ENCODE measurements at regions of chrX and their contacts with region 1.

Region 1: DNA sequence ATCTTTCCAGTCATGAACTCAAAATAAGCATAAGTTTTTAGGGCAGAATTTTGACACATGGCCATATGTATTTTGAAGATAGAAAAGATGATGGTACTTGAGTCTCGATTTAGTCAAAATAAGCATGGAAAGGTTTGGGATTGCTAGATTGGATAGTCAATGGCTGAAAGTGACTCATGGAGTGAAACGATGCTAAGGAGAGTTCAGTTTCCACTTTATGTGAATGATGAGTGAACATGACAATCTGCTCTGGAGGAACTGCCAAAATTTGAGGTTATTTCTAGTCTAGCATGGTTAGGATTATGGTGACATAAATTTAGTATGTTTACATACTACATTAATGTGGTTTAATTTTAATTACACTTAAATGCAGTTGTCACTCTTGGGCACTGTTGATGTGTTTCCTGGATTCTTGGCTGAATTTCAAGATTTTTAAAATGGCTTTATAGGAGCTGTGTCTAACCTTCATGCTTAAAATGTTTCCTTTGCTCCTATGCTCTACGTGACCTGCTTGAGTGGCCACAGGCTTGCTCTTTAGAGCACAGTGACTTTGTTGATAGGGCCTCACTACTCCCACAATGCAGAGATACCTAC is 17.1 kb downstream of the DDX3X start:
- DNase-seq: peak in 1 of 14 experiments; percentile 27
- ATAC-seq: peak; percentile 17
- H3K4me3 ChIP-seq: no peak overlapping the region
- H3K4me3 Mint-ChIP-seq: peak overlapping the region; percentile 0
- H3K27ac ChIP-seq: no peak overlapping the region
- H3K27ac Mint-ChIP-seq: peak overlapping the region; percentile 59
- H3K4me1 ChIP-seq: peaks cover 10% of the 10 kb centered on the region
- H3K4me1 Mint-ChIP-seq: peaks cover 43% of the 10 kb centered on the region
- H3K27me3 ChIP-seq: no peaks in the 10 kb centered on the region
- H3K27me3 Mint-ChIP-seq: no peaks in the 10 kb centered on the region
- CTCF ChIP-seq: no peak

Region 2: GRCh38 chrX:41313419-41313818 is 37.7 kb before region 1 on chrX:
- CTCF ChIA-PET with region 1: no interaction called
- POLR2A ChIA-PET with region 1: no interaction called
- intact Hi-C with region 1: loop called in 1 of 2 experiments (anchors 2 kb)
- DNase-seq: no peak
- ATAC-seq: no peak
- H3K4me3 ChIP-seq: no peak overlapping the region
- H3K4me3 Mint-ChIP-seq: no peak overlapping the region
- H3K27ac ChIP-seq: no peak overlapping the region
- H3K27ac Mint-ChIP-seq: no peak overlapping the region
- H3K4me1 ChIP-seq: no peaks in the 10 kb centered on the region
- H3K4me1 Mint-ChIP-seq: no peaks in the 10 kb centered on the region
- H3K27me3 ChIP-seq: no peaks in the 10 kb centered on the region
- H3K27me3 Mint-ChIP-seq: no peaks in the 10 kb centered on the region
- CTCF ChIP-seq: no peak

Region 3: DNA sequence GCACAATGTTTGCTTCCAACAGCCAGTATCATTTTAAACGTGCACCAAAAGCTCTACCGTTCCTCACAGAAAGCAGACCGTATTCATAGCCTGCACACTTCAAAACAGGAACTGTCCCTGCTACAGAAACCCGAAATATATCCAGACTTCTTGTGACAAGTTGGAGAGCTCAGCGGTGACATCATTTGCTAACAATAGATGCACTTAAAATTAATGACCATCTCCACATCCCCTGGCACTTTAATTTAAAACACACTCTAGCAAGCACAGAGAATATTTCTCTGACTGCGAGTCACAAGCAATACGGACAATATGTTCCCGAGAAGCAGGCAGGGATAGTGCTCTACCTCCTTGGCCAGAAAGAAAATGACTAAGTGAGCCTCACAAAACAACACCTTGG is 98.5 kb after region 1 on chrX:
- CTCF ChIA-PET with region 1: no interaction called
- POLR2A ChIA-PET with region 1: no interaction called
- intact Hi-C with region 1: loop called in 1 of 2 experiments (anchors 5 kb)
- DNase-seq: peak in 1 of 14 experiments; percentile 22
- ATAC-seq: no peak
- H3K4me3 ChIP-seq: no peak overlapping the region
- H3K4me3 Mint-ChIP-seq: peak overlapping the region; percentile 1
- H3K27ac ChIP-seq: no peak overlapping the region
- H3K27ac Mint-ChIP-seq: no peak overlapping the region
- H3K4me1 ChIP-seq: no peaks in the 10 kb centered on the region
- H3K4me1 Mint-ChIP-seq: peaks cover 11% of the 10 kb centered on the region
- H3K27me3 ChIP-seq: no peaks in the 10 kb centered on the region
- H3K27me3 Mint-ChIP-seq: no peaks in the 10 kb centered on the region
- CTCF ChIP-seq: no peak